ENCODE measurements at regions of chr18 and their contacts with region 1.

Region 1: GRCh38 chr18:34643989-34644388 is 66.1 kb upstream of the DTNA start:
- DNase-seq: no peak
- ATAC-seq: no peak
- H3K4me3 ChIP-seq: no peak overlapping the region
- H3K27ac ChIP-seq: no peak overlapping the region
- H3K4me1 ChIP-seq: peaks cover under 1% of the 10 kb centered on the region; the same call in 1 of the 2 replicates
- H3K27me3 ChIP-seq: no peaks in the 10 kb centered on the region
- CTCF ChIP-seq: no peak; the same call in 1 of the 2 replicates

Region 2: GRCh38 chr18:34595673-34596303 is 48.2 kb before region 1 on chr18:
- CTCF ChIA-PET with region 1: no interaction called
- POLR2A ChIA-PET with region 1: no interaction called
- intact Hi-C with region 1: loop called (anchors 2 kb)
- DNase-seq: peak; percentile 8
- ATAC-seq: peak; percentile 42; the same call in 1 of the 2 replicates
- H3K4me3 ChIP-seq: no peak overlapping the region
- H3K27ac ChIP-seq: no peak overlapping the region
- H3K4me1 ChIP-seq: peaks cover 6% of the 10 kb centered on the region
- H3K27me3 ChIP-seq: no peaks in the 10 kb centered on the region
- CTCF ChIP-seq: peak; percentile 42; the same call in 1 of the 2 replicates

Region 3: GRCh38 chr18:34729264-34729663 is 85.3 kb after region 1 on chr18:
- CTCF ChIA-PET with region 1: no interaction called
- POLR2A ChIA-PET with region 1: no interaction called
- intact Hi-C with region 1: no loop called
- DNase-seq: peak; percentile 29
- ATAC-seq: peak; percentile 48
- H3K4me3 ChIP-seq: no peak overlapping the region
- H3K27ac ChIP-seq: no peak overlapping the region
- H3K4me1 ChIP-seq: no peaks in the 10 kb centered on the region
- H3K27me3 ChIP-seq: no peaks in the 10 kb centered on the region
- CTCF ChIP-seq: peak; percentile 52